ENCODE measurements at regions of chr2 and their contacts with region 1.

Region 1: DNA sequence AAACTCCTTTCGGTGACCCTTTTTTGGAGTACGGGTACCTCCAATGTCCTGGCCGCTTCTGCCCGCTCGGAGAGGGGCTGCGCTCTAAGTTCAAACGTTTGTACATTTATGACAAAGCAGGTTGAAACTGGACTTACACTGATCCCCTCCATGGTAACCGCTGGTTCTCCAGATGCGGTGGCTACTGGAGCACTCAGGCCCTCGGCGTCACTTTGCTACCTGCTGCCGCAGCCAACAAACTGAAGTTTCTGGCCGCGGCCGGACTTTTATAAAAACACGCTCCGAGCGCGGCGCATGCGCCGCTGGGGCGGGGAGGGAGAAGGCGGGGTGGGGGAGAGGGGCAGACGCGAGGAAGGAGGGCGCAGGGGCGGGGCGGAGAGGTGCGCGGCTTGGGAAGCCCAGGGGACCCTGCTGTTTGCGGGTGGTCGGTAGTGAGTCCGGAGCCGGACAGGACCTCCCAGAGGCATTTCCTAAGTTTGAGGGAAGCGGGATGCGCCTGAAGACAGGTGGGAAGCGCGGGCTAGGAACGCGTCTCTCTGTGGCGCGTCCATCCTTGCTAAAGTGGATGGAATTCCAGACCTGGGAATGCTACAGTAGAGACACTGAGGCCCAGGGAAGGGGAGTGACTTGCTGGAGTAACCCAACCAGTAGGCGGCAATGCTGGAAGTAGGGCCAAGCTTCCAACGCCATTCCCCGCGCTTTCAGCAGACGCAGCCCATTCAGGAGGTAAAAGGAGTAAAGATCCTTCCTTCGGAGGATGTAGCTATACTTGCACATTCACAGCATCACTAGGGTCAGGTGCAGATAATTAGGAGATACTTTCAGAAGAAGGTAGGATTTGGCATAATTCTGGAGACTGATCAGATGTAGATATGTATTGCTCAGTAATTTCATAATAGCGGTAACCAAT is at the start of gene CXCR4:
- DNase-seq: peak; percentile 82
- H3K4me3 Mint-ChIP-seq: peak within 1 kb of the TSS; percentile 95
- H3K27ac Mint-ChIP-seq: peak within 1 kb of the TSS; percentile 91
- H3K4me1 Mint-ChIP-seq: peaks cover 57% of the 10 kb centered on the region
- H3K27me3 Mint-ChIP-seq: no peaks in the 10 kb centered on the region
- total RNA-seq, gene CXCR4: 70.2 to 72.6 TPM

Region 2: GRCh38 chr2:135876066-135876711 is 242.0 kb before region 1 on chr2 and contains the start of gene MCM6:
- CTCF ChIA-PET with region 1: no interaction called
- intact Hi-C with region 1: loop called (anchors 1 kb)
- DNase-seq: peak; percentile 100
- H3K4me3 Mint-ChIP-seq: peak within 1 kb of the TSS; percentile 91
- H3K27ac Mint-ChIP-seq: peak within 1 kb of the TSS; percentile 99
- H3K4me1 Mint-ChIP-seq: peaks cover 39% of the 10 kb centered on the region
- H3K27me3 Mint-ChIP-seq: no peaks in the 10 kb centered on the region
- total RNA-seq, gene MCM6: 221 to 226 TPM

Region 3: GRCh38 chr2:136008205-136008865 is 109.8 kb before region 1 on chr2:
- CTCF ChIA-PET with region 1: no interaction called
- intact Hi-C with region 1: loop called (anchors 2 kb)
- DNase-seq: peak; percentile 73
- H3K4me3 Mint-ChIP-seq: no peak overlapping the region
- H3K27ac Mint-ChIP-seq: peak overlapping the region; percentile 15
- H3K4me1 Mint-ChIP-seq: peaks cover 38% of the 10 kb centered on the region
- H3K27me3 Mint-ChIP-seq: no peaks in the 10 kb centered on the region

Region 4: GRCh38 chr2:136129601-136130000 is 11.4 kb after region 1 on chr2:
- CTCF ChIA-PET with region 1: interaction called, 3 read pairs
- intact Hi-C with region 1: loop called (anchors 1 kb)
- DNase-seq: peak; percentile 57
- H3K4me3 Mint-ChIP-seq: peak overlapping the region; percentile 61
- H3K27ac Mint-ChIP-seq: peak overlapping the region; percentile 88
- H3K4me1 Mint-ChIP-seq: peaks cover 95% of the 10 kb centered on the region
- H3K27me3 Mint-ChIP-seq: no peaks in the 10 kb centered on the region

Region 5: GRCh38 chr2:136171221-136171620 is 53.1 kb after region 1 on chr2:
- CTCF ChIA-PET with region 1: no interaction called
- intact Hi-C with region 1: no loop called
- DNase-seq: no peak
- H3K4me3 Mint-ChIP-seq: no peak overlapping the region
- H3K27ac Mint-ChIP-seq: no peak overlapping the region
- H3K4me1 Mint-ChIP-seq: peaks cover 7% of the 10 kb centered on the region
- H3K27me3 Mint-ChIP-seq: no peaks in the 10 kb centered on the region

Region 6: DNA sequence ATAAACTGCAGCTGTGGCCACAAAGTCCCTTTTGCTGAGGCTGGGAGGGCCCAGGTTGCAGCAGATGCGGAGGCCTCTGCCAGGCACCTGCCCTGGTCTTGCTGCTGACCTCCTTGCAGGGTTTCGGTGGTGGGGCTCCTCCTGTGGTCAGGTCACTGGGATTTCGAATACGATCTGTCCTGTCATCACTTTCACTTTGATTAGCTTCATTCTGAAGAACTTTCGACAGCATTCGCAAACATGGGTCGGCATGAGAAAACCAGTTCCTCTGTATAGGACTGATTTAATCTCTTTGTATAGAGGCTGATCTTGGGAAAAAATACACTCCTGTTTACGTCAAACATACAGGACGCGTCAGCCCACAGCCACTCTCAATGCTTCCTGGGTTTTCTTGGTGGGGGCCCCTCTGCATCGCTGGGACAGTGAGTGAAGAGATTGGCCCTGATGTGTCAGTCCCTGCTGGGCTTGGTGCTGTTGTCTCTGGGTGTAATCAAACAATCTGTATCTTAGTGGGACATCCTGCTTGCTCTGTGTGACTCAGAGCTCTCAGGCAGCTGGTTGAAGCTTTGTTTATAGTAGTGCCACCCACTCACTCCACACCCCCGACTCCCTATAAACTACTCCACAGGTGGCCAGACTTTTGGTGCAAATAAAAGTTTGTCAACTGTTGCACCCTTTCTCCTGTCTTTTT is 209.1 kb after region 1 on chr2:
- CTCF ChIA-PET with region 1: no interaction called
- intact Hi-C with region 1: loop called (anchors 1 kb)
- DNase-seq: peak; percentile 89
- H3K4me3 Mint-ChIP-seq: peak overlapping the region; percentile 52
- H3K27ac Mint-ChIP-seq: peak overlapping the region; percentile 82
- H3K4me1 Mint-ChIP-seq: peaks cover 62% of the 10 kb centered on the region
- H3K27me3 Mint-ChIP-seq: no peaks in the 10 kb centered on the region